Activated CD8-positive, alpha-beta T cell treated with anti-CD3 and anti-CD28 coated beads, Interleukin-2, amount 10 ng/mL, durations not matched to agents 7 days and 5 days (primary cell): ENCODE measurements at regions of chr19 and their contacts with region 1.

Region 1: GRCh38 chr19:12484371-12485051 is at the start of gene ZNF709:
- DNase-seq: peak; percentile 91
- ATAC-seq: peak; percentile 97
- H3K4me3 Mint-ChIP-seq: peak within 1 kb of the TSS; percentile 84
- H3K27ac Mint-ChIP-seq: peak within 1 kb of the TSS; percentile 81
- H3K4me1 Mint-ChIP-seq: peaks cover 28% of the 10 kb centered on the region
- H3K27me3 Mint-ChIP-seq: no peaks in the 10 kb centered on the region
- total RNA-seq, gene ZNF709: 1.7 to 3.1 TPM

Region 2: DNA sequence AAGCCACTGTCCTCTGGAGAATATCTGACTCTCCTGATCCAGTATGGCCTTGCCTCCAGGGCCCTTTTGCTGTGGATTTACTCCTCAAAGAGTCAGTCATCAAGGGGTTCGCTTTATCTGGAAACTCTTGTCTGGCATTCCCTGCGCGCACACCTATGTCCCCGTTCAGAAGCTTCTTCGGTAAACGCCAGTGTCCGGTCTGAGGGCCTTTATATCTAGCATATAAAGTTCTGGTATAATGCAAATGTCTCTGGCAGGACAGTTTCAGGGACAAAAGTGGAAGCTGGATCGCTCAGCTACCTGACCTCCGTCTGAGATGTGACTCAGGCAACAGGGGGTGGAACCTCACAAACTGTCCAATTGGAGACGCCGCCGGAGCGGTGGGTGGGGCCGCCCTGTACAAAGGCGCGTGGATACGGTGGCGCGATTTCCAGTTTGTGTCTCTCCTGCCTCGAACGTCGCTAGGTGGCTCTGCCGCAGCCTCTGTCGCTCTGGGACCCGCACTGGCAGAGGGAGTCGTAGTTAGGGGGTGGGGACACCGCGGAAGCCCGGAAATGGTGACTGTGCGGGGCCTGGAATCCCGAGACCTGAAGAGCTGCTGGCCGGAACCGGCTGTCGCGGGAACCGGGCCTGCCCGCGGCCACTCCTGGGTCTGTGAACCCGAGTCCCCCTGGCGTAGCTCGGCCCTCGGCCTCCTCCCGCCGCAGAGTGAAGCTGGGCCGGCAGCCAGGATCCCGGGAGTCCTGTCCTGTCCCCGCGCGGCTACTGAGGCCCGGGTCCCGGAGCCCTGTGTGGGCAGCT is 10.7 kb after region 1 on chr19:
- CTCF ChIA-PET with region 1: interaction called, 3 read pairs
- POLR2A ChIA-PET with region 1: interaction called, 13 read pairs
- DNase-seq: peak; percentile 95
- ATAC-seq: peak; percentile 99
- H3K4me3 Mint-ChIP-seq: peak overlapping the region; percentile 81
- H3K27ac Mint-ChIP-seq: peak overlapping the region; percentile 83
- H3K4me1 Mint-ChIP-seq: peaks cover 15% of the 10 kb centered on the region
- H3K27me3 Mint-ChIP-seq: no peaks in the 10 kb centered on the region